ENCODE measurements at regions of chr3 and their contacts with region 1.

Region 1: GRCh38 chr3:44198284-44199269 is 43.1 kb upstream of the TOPAZ1 start:
- DNase-seq: peak; percentile 69
- H3K4me3 ChIP-seq: no peak overlapping the region
- H3K27ac ChIP-seq: no peak overlapping the region
- H3K4me1 ChIP-seq: no peaks in the 10 kb centered on the region
- H3K27me3 ChIP-seq: peaks cover 2 to 3% of the 10 kb centered on the region in 2 experiments
- CTCF ChIP-seq: peak; percentile 72 to 83
- POLR2A ChIP-seq: no peak

Region 2: DNA sequence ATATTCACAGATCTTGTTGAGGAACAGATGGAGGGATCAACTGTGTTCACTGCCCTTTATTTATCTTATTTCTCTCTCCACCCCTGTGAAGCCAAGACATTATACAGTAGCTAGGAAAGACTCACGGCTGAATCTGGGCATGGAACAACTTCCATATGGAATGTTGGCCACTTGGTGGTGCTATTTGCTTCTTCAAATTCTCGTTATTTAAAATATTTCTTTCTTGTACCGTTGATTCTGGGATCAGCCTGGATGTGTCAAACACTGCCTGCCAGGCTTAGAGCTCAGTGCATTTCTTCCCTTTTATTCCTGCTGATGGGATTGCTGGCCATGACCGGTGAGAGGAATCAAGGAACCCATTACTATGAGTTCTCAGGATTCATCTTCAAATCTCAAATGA is 1236.9 kb before region 1 on chr3:
- CTCF ChIA-PET with region 1: interaction called, 54 read pairs
- POLR2A ChIA-PET with region 1: no interaction called
- dilution Hi-C with region 1: no loop called
- intact Hi-C with region 1: loop called (anchors 1 kb)
- DNase-seq: peak; percentile 55
- H3K4me3 ChIP-seq: no peak overlapping the region
- H3K27ac ChIP-seq: no peak overlapping the region
- H3K4me1 ChIP-seq: no peaks in the 10 kb centered on the region
- H3K27me3 ChIP-seq: peaks cover 3 to 5% of the 10 kb centered on the region in 2 experiments
- CTCF ChIP-seq: peak; percentile 41 to 42
- POLR2A ChIP-seq: no peak

Region 3: DNA sequence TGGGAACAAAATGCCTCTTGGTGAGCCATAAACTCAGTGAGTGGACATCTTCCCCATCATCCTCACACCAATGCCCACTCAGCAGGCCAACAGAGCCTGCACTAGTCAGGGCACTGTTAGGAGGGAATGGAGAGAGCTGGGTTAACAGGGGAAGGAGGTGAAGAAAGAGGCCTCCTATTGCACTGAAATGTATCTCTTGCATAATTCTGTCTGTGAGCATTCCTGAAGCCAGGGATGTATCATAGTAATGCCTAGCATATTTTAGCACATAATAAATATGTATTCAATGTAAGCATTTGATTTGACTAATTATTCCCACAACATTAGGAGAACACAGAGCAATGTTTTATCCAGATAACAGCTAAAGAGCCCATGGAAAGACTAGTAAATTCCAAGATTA is 658.0 kb before region 1 on chr3:
- CTCF ChIA-PET with region 1: interaction called, 13 read pairs
- POLR2A ChIA-PET with region 1: no interaction called
- dilution Hi-C with region 1: no loop called
- intact Hi-C with region 1: loop called (anchors 1 kb)
- DNase-seq: no peak
- H3K4me3 ChIP-seq: no peak overlapping the region
- H3K27ac ChIP-seq: no peak overlapping the region
- H3K4me1 ChIP-seq: peaks cover 3% of the 10 kb centered on the region
- H3K27me3 ChIP-seq: no peaks in the 10 kb centered on the region
- CTCF ChIP-seq: no peak
- POLR2A ChIP-seq: no peak

Region 4: DNA sequence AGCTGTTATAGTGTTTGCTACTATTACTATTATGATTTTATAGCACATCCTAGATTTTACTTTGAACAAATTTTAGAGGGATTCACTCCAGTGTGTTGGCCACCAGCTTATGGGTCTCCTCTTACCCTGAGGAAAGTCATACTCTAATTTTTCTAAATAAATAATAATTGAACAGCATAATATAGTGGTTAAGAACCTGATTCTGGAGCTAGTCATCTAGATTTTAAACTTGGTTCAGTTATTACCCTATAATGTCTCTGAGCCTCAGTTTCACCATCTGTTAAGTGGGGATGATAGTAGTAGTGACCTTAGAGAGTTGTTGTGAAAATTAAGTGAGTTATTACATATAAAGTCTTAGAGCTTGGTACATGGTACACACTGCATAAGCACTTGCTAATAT is 12.4 kb after region 1 on chr3:
- CTCF ChIA-PET with region 1: interaction called, 14 read pairs
- POLR2A ChIA-PET with region 1: no interaction called
- dilution Hi-C with region 1: no loop called
- intact Hi-C with region 1: no loop called
- DNase-seq: no peak
- H3K4me3 ChIP-seq: no peak overlapping the region
- H3K27ac ChIP-seq: no peak overlapping the region
- H3K4me1 ChIP-seq: no peaks in the 10 kb centered on the region
- H3K27me3 ChIP-seq: peaks cover 0 to 6% of the 10 kb centered on the region in 2 experiments
- CTCF ChIP-seq: no peak
- POLR2A ChIP-seq: no peak